Mucosa of descending colon (tissue), 3 donors: ENCODE measurements at regions of chr2 and their contacts with region 1.

Region 1: DNA sequence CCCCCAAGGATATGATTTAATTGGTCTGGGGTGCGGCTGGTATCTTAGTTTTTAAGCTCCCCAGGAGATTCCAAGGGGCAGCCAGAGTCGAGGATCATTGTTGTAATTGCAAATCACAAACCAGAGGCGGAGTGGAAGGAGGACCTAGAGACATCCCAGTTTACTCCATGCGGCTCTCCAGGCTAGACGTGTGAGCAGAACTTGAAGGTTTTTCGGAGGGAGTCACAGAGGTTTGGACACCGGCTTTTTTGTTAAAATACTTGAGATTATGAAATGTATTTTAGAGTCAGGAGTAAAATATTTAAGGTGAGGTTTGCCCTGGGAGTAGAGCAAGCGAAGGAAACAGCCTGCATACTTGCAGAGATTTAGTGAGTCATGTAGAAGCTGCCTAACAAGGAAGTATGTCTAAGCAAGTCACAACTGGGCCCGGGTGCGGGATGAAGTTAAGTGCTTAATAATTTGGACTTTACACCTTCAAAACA is 39.5 kb downstream of the TGOLN2 start:
- DNase-seq: peak in 1 of 3 donors; percentile 53
- ATAC-seq: peak; percentile 88
- H3K4me3 ChIP-seq: no peak overlapping the region
- H3K4me1 ChIP-seq: no peaks in the 10 kb centered on the region
- CTCF ChIP-seq: no peak

Region 2: GRCh38 chr2:85066874-85067351 is 221.4 kb before region 1 on chr2:
- intact Hi-C with region 1: loop called (anchors 5 to 10 kb)
- DNase-seq: peak in 2 of 3 donors; percentile 67 to 78
- ATAC-seq: peak; percentile 79
- H3K4me3 ChIP-seq: no peak overlapping the region
- H3K4me1 ChIP-seq: no peaks in the 10 kb centered on the region
- CTCF ChIP-seq: no peak

Region 3: DNA sequence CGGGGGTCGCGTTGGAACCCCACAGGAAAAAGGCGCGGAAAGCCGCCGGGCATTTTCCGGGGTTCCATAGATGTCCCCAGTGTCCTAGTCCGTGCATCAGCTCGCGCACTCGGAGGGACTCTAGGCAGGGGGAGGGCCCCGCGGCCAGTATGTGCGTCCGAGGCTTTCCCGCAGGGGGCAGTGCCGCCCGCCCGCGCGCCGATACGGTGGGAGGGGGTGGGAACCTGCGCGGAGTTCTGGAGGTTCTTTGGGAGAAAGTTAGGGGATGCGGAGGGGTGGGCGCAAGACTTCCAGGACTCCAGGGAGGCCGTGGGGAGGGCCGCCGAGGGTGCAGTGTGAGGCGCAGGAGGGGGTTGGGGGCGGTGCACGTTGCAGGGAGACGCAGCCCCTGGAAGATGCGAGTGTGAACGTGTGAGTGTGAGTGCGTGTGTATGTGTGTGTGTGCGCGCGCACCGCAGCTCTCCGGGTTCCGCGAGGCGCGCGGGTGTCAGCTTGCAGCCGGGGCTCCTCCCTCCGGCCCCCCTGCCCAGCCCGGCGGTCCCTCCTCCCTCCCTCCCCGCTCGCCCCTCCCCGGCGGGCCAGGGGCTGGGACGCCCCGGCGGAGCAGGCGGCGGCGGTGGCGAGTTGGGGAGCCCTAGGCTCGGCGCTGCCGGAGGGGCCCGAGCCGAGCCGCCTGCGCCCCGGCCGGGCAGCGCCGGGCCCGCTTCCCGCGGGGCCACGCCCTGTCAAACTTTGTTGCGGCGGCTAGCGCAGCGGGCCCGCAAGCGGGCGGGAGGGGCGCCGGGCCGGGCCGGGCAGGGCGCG is 155.2 kb before region 1 on chr2 and contains the start of gene TCF7L1:
- intact Hi-C with region 1: loop called in 1 of 2 experiments (anchors 5 kb)
- DNase-seq: peak; percentile 59 to 74 (median 69)
- ATAC-seq: peak; percentile 84
- H3K4me3 ChIP-seq: peak within 1 kb of the TSS; percentile 11
- H3K4me1 ChIP-seq: peaks cover 12% of the 10 kb centered on the region
- CTCF ChIP-seq: peak; percentile 39
- total RNA-seq, gene TCF7L1: 1.3 to 22.9 (median 3.0) TPM